Prostate gland (tissue), 2 donors: ENCODE measurements at regions of chr18 and their contacts with region 1.

Region 1: DNA sequence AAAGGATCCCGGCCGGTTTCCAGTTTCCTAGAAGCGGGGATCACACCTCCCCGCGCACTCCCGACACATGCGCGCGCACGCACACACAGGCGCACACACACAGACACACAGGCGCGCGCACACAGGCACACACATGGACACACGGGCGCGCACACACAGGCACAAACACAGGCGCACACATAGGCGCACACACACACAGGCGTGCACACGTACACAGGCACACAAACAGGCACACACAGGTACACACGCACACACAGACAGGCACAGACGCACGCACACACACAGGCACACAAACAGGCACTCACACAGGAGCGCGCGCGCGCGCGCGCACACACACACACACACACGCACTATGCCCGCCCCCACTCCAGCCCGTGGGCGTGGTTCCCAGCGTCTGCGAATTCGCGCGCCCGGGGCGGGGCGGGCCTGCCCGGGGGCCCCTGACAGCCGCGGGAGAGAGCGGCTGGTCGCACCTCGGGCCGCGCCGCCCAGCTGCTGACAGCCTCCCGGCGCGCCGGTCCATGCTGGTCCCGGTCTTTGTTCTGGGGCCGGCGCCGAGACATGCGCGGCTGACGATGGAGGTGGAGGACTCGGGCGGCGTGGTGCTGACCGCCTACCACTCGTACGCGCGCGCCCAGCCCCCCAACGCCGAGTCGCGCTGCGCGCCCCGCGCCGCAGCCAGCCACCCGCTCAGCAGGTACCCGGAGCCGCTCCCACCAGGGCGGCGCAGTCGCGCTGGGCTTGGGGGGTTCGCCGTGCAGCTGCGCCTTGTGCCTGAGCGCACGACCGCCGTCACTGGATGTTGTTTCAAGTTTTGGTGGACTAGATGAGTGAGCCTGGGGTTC is at the start of gene ARHGAP28:
- DNase-seq: peak; percentile 66
- H3K4me3 ChIP-seq: peak within 1 kb of the TSS; percentile 46 to 63
- H3K27ac ChIP-seq: peak within 1 kb of the TSS; percentile 82 to 83
- H3K4me1 ChIP-seq: no peaks in the 10 kb centered on the region
- H3K27me3 ChIP-seq: no peaks in the 10 kb centered on the region
- CTCF ChIP-seq: peak in 3 of 4 experiments; percentile 30 to 53 (median 45)
- POLR2A ChIP-seq: peak; percentile 35
- total RNA-seq, gene ARHGAP28: 20.3 to 22.6 TPM

Region 2: GRCh38 chr18:6543330-6543908 is 186.1 kb before region 1 on chr18:
- intact Hi-C with region 1: loop called (anchors 5 kb)
- DNase-seq: no peak
- H3K4me3 ChIP-seq: no peak overlapping the region
- H3K27ac ChIP-seq: no peak overlapping the region
- H3K4me1 ChIP-seq: no peaks in the 10 kb centered on the region
- H3K27me3 ChIP-seq: no peaks in the 10 kb centered on the region
- CTCF ChIP-seq: peak in 3 of 4 experiments; percentile 59 to 66 (median 65)
- POLR2A ChIP-seq: no peak

Region 3: GRCh38 chr18:6648581-6648980 is 80.9 kb before region 1 on chr18:
- intact Hi-C with region 1: loop called (anchors 10 kb)
- DNase-seq: no peak
- H3K4me3 ChIP-seq: no peak overlapping the region
- H3K27ac ChIP-seq: no peak overlapping the region
- H3K4me1 ChIP-seq: no peaks in the 10 kb centered on the region
- H3K27me3 ChIP-seq: no peaks in the 10 kb centered on the region
- CTCF ChIP-seq: no peak
- POLR2A ChIP-seq: no peak

Region 4: GRCh38 chr18:6781786-6782185 is 52.3 kb after region 1 on chr18:
- intact Hi-C with region 1: loop called (anchors 5 kb)
- DNase-seq: no peak
- H3K4me3 ChIP-seq: no peak overlapping the region
- H3K27ac ChIP-seq: peak overlapping the region in 1 of 2 donors; percentile 3
- H3K4me1 ChIP-seq: no peaks in the 10 kb centered on the region
- H3K27me3 ChIP-seq: no peaks in the 10 kb centered on the region
- CTCF ChIP-seq: no peak
- POLR2A ChIP-seq: no peak

Region 5: GRCh38 chr18:6885992-6886796 is 156.7 kb after region 1 on chr18:
- intact Hi-C with region 1: loop called (anchors 5 kb)
- DNase-seq: peak; percentile 50
- H3K4me3 ChIP-seq: no peak overlapping the region
- H3K27ac ChIP-seq: no peak overlapping the region
- H3K4me1 ChIP-seq: no peaks in the 10 kb centered on the region
- H3K27me3 ChIP-seq: no peaks in the 10 kb centered on the region
- CTCF ChIP-seq: peak; percentile 61 to 75 (median 72)
- POLR2A ChIP-seq: no peak